ENCODE measurements at regions of chr2 and their contacts with region 1.

Region 1: DNA sequence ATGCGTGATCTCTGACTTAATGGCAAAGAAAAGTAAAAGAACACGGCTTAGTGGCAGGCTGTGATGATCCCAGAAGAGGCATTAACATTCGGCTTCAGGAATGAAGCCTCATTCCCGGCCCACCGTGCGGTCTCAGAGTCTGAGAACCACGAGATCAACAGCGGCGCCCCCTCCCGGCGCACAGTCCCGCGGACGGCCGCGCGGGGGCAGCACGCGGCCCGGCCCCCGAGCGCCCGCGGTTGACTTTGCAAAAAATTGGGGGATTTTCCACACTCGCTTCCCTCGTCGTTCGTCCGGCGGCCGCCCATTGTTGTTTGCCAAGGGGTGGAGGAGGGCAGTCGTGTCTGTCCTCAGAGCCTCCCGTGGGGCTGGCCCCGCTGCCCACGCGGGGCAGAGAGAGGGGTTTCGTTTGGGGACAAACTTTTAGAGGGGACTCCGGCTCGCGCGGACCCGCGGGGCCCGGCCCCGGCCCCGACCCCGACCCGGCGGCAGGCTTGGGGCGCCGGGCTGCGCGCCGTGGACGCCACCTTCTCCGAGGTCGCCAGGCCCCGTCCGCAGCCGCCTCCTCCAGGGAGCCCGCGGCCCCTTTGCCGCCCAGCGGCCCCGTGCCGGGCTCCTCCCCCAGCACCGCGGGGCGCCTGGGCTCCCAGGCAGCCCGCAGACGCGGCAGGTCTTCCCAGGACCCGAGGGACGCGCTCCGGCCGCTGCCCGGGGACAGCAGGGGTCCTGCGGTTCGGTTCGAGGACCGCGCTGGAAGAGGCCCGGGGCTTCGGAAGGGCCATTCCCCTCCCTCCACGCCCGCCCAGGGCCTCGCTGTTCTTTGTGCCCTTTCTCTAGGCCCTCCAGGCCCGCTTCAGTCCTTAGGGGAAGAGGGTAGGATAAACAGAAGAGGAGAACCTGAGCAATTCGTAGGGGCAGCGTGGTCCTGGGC is 3.4 kb upstream of the HS6ST1 start:
- DNase-seq: peak; percentile 95
- H3K4me3 Mint-ChIP-seq: peak overlapping the region; percentile 64
- H3K27ac Mint-ChIP-seq: peak overlapping the region; percentile 80
- H3K4me1 Mint-ChIP-seq: peaks cover 11% of the 10 kb centered on the region
- H3K27me3 Mint-ChIP-seq: peaks cover 8% of the 10 kb centered on the region

Region 2: DNA sequence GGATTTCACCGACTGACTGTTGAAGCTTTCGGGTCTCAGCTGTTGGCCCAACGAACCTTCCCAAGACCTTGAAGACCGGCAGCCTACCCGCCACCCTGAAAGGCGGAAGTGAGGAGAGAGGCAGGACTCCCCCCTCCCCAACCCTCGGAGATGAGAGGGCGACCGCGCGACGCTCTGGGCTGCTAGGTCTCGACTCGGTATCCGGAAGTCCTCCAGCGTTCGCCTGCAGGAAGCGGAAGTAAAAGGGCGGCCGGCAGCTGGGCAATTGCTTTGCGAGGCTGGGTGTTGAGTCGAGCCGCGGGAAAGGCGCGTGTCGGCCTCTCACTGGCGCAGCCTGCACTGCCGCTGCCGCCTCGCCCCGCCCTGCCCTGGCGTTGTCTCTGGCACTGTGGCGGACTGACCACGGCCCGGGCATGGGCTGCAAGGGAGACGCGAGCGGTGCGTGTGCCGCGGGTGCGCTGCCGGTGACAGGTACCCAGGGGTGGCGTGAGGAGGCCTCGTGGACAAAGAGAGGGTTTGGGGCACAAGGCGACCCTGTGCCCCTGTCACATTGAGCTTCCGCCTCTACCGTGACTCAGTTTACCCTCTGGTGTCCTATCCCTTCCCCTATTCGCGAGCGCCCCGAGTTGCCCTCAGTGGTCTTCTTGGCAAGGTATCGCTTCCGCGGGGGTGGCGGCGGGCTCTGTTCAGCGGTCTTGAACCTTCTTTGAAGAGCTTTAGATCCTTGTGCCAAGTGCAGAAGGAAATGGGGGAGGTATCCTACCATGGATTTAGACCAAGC is 230.9 kb before region 1 on chr2 and contains the start of gene UGGT1:
- intact Hi-C with region 1: loop called (anchors 5 kb)
- DNase-seq: peak; percentile 98
- H3K4me3 Mint-ChIP-seq: peak within 1 kb of the TSS; percentile 89
- H3K27ac Mint-ChIP-seq: peak within 1 kb of the TSS; percentile 93
- H3K4me1 Mint-ChIP-seq: peaks cover 23% of the 10 kb centered on the region
- H3K27me3 Mint-ChIP-seq: no peaks in the 10 kb centered on the region
- total RNA-seq, gene UGGT1: 69.9 and 72.1 TPM in 2 replicates

Region 3: DNA sequence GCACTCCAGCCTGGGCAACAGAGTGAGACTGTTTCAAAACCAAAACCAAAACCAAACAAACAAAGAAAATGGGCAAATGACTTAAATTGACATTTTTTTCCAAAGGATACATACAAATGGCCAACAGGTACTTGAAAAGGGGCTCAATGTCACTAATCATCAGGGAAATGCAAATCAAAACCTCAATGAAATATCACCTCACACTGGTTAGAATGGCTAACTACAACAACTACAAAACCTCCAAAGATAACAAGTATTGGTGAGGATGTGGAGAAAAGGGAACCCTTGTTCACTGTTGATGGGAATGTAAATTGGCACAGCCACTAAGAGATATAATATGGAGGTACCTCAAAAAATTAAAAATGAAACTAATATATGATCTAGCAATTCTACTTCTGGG is 209.8 kb after region 1 on chr2:
- intact Hi-C with region 1: loop called (anchors 5 kb)
- DNase-seq: no peak
- H3K4me3 Mint-ChIP-seq: no peak overlapping the region
- H3K27ac Mint-ChIP-seq: no peak overlapping the region
- H3K4me1 Mint-ChIP-seq: peaks cover 9% of the 10 kb centered on the region
- H3K27me3 Mint-ChIP-seq: peaks cover 5% of the 10 kb centered on the region

Region 4: GRCh38 chr2:128667391-128667790 is 345.3 kb after region 1 on chr2:
- intact Hi-C with region 1: no loop called
- DNase-seq: peak; percentile 24
- H3K4me3 Mint-ChIP-seq: no peak overlapping the region
- H3K27ac Mint-ChIP-seq: no peak overlapping the region
- H3K4me1 Mint-ChIP-seq: peaks cover 2% of the 10 kb centered on the region
- H3K27me3 Mint-ChIP-seq: peaks cover 5% of the 10 kb centered on the region

Region 5: DNA sequence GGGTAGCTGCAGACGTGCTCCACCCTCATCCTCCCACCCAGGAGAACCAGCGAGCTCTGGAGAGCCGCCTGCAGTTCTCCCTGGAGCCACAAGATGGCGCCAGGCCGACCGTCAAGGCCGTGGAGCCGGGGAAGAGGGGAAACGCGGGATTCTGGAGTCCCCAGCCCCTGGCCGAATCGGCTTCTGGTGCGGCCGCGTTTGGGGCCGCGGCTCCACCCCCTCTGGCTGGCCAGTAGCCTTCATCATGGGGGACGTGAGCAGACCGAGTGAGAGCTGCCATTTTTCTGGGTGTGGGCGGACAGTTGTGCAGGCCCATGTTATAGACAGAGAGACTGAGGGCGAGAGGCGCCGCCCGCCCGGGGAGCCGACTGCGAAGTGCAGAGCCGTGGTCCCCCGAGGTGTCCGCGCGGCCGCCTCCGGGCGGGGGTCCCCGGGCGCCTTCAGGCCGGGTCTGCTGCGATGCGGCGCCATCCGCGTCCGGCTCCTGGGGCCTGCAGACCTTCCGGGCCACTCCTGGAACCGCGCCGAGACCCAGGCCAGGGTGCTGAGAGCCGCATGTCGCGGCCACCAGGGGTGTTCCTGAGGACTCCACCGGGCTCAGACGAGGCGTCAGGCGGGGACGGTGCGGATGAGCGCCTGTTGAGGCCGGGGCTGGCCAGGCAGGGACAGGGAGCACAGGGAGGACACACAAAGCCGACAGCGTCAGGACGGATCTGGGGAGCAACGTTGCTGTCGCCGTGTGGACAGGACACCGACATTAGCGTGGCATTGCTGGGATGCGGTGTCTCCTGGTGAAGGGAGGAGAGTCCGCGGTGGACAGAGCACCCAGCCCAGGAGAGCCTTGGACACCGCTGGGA is 414.9 kb after region 1 on chr2:
- intact Hi-C with region 1: loop called (anchors 5 kb)
- DNase-seq: peak; percentile 90
- H3K4me3 Mint-ChIP-seq: peak overlapping the region; percentile 72
- H3K27ac Mint-ChIP-seq: no peak overlapping the region
- H3K4me1 Mint-ChIP-seq: peaks cover 12% of the 10 kb centered on the region
- H3K27me3 Mint-ChIP-seq: peaks cover 17% of the 10 kb centered on the region